H1 (cell line): ENCODE measurements at regions of chr12 and their contacts with region 1.

Region 1: DNA sequence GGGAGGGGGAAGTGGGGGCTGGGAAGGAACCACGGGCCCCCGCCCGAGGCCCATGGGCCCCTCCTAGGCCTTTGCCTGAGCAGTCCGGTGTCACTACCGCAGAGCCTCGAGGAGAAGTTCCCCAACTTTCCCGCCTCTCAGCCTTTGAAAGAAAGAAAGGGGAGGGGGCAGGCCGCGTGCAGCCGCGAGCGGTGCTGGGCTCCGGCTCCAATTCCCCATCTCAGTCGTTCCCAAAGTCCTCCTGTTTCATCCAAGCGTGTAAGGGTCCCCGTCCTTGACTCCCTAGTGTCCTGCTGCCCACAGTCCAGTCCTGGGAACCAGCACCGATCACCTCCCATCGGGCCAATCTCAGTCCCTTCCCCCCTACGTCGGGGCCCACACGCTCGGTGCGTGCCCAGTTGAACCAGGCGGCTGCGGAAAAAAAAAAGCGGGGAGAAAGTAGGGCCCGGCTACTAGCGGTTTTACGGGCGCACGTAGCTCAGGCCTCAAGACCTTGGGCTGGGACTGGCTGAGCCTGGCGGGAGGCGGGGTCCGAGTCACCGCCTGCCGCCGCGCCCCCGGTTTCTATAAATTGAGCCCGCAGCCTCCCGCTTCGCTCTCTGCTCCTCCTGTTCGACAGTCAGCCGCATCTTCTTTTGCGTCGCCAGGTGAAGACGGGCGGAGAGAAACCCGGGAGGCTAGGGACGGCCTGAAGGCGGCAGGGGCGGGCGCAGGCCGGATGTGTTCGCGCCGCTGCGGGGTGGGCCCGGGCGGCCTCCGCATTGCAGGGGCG is at the start of gene GAPDH:
- DNase-seq: peak; percentile 87 to 91
- H3K4me3 ChIP-seq: peak within 1 kb of the TSS; percentile 83 to 98 (median 90)
- H3K27ac ChIP-seq: peak within 1 kb of the TSS; percentile 98
- H3K4me1 ChIP-seq: peaks cover 0 to 19% (median 16%) of the 10 kb centered on the region in 4 experiments; a peak in 6 of 7 replicates
- H3K27me3 ChIP-seq: no peaks in the 10 kb centered on the region
- CTCF ChIP-seq: no peak; a peak in 1 of 4 replicates
- EP300 ChIP-seq: peak in 1 of 2 experiments; percentile 7; a peak in 1 of 3 replicates
- POLR2A ChIP-seq: peak in 1 of 2 experiments; percentile 85; a peak in 1 of 3 replicates
- RAD21 ChIP-seq: no peak
- total RNA-seq, gene GAPDH: 5,175 and 5,215 TPM in 2 replicates

Region 2: DNA sequence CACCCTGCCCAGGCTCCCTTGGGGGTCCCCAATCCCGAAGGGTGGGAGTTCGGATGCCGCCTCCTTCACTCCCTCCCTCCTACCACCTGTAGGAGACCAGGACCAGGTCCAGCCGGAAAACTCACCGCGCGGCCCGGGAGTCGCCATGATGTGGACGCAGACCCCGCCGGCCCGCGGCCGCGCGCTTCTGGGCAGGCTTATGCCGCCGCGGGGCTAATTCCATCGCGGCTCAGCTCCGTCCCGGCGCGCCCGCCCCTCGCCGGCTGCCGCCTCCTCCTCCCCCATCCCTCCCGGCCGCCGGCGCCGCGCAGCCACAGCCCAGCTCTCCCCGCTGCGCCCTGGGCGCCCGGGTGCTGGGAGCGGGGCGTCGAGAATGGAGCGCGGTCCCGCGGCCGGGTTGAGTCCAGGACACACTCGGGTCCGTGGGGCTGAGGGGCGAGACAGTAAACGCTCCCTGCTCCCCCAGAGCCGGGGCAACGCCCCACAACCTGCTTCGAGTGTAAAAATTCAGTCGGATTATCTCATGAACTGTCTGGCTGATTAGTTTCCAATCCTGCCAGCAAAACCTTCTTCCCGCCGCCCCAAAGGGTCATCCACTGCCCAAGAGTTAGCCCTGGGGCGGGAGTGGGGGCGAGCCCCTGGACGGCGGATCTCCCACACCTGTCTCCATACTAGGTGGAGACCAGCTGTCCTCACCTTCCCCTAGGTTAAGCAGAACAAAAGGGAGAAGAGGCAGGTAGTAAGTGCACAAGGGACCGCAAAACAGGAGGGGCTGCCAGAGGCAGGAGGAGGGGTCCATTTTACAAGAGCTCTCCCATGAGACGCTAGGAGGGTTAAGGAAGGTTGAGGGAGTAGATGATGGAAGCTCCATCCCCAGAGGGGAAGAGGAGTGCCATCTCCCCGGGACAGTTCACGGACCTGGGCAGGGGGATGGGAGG is 588.8 kb before region 1 on chr12 and contains the start of gene ANO2:
- CTCF ChIA-PET with region 1: no interaction called
- POLR2A ChIA-PET with region 1: no interaction called
- DNase-seq: peak in 1 of 2 experiments; percentile 71
- H3K4me3 ChIP-seq: peak within 1 kb of the TSS; percentile 64 to 91 (median 82)
- H3K27ac ChIP-seq: no peak within 1 kb of the TSS
- H3K4me1 ChIP-seq: peaks cover 0 to 5% (median 2%) of the 10 kb centered on the region in 4 experiments; a peak in 4 of 7 replicates
- H3K27me3 ChIP-seq: peaks cover 4 to 23% (median 10%) of the 10 kb centered on the region in 4 experiments; a peak in 5 of 7 replicates
- CTCF ChIP-seq: no peak
- EP300 ChIP-seq: no peak
- POLR2A ChIP-seq: peak; percentile 62 to 74
- RAD21 ChIP-seq: no peak
- total RNA-seq, gene ANO2: 3.5 and 5.5 TPM in 2 replicates

Region 3: DNA sequence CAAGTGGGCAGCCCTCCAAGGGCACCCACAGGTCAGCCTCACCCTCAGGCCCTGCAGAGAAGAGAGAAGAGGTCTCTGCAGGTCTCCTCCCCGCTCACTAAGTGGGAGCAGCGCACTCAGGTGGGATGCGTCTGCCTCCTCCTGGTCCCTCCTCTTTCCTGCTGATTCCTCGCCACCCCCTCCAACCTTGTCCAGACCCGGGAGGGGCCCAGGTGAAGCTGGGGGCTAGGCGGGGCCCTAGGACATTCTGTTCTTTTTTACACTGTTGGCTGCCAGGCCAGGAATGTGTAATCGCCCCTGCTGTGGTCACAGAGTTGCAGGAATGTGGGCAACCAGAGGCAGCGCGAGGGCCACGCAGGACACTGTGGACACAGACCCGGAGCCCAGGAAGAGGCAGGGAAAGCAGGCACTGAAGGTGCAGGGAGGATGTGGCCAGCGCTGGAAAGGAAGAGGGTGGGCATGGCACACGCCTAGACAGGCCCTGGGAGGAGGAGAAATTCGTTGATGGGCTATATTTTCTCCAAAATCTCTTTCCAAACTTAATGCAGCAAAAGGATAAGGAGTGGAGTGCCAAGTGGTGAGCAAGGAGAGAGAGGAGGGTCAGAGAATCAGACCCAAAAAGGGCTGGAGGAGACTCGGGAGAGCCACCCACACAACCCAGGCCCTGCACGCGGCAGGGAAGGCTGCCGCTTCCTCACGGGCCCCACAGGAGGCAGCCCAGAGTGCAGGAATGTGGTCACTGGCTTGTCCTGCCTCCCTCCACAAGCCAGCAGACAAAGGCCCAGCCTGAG is 157.8 kb before region 1 on chr12:
- CTCF ChIA-PET with region 1: interaction called, 3 read pairs
- POLR2A ChIA-PET with region 1: interaction called, 37 read pairs
- DNase-seq: peak; percentile 54 to 74
- H3K4me3 ChIP-seq: peak overlapping the region; percentile 64 to 84 (median 74)
- H3K27ac ChIP-seq: peak overlapping the region; percentile 92
- H3K4me1 ChIP-seq: peaks cover 5 to 47% (median 33%) of the 10 kb centered on the region in 4 experiments
- H3K27me3 ChIP-seq: peaks cover 0 to 2% (median 0%) of the 10 kb centered on the region in 4 experiments; a peak in 2 of 7 replicates
- CTCF ChIP-seq: peak in 2 of 3 experiments; percentile 41 to 58; a peak in 3 of 4 replicates
- EP300 ChIP-seq: no peak
- POLR2A ChIP-seq: peak in 1 of 2 experiments; percentile 69; a peak in 2 of 3 replicates
- RAD21 ChIP-seq: peak; percentile 30 to 55

Region 4: GRCh38 chr12:6470375-6471163 is 63.5 kb before region 1 on chr12 and contains the start of gene VAMP1:
- CTCF ChIA-PET with region 1: interaction called, 8 read pairs
- POLR2A ChIA-PET with region 1: interaction called, 84 read pairs
- DNase-seq: peak; percentile 91 to 97
- H3K4me3 ChIP-seq: peak within 1 kb of the TSS; percentile 75 to 87 (median 86)
- H3K27ac ChIP-seq: peak within 1 kb of the TSS; percentile 67; the same call in 1 of the 2 replicates
- H3K4me1 ChIP-seq: peaks cover 3 to 7% (median 3%) of the 10 kb centered on the region in 4 experiments; a peak in 3 of 7 replicates
- H3K27me3 ChIP-seq: no peaks in the 10 kb centered on the region; a peak in 1 of 7 replicates
- CTCF ChIP-seq: no peak
- EP300 ChIP-seq: no peak
- POLR2A ChIP-seq: peak; percentile 99
- RAD21 ChIP-seq: no peak
- total RNA-seq, gene VAMP1: 9.3 and 10.8 TPM in 2 replicates

Region 5: DNA sequence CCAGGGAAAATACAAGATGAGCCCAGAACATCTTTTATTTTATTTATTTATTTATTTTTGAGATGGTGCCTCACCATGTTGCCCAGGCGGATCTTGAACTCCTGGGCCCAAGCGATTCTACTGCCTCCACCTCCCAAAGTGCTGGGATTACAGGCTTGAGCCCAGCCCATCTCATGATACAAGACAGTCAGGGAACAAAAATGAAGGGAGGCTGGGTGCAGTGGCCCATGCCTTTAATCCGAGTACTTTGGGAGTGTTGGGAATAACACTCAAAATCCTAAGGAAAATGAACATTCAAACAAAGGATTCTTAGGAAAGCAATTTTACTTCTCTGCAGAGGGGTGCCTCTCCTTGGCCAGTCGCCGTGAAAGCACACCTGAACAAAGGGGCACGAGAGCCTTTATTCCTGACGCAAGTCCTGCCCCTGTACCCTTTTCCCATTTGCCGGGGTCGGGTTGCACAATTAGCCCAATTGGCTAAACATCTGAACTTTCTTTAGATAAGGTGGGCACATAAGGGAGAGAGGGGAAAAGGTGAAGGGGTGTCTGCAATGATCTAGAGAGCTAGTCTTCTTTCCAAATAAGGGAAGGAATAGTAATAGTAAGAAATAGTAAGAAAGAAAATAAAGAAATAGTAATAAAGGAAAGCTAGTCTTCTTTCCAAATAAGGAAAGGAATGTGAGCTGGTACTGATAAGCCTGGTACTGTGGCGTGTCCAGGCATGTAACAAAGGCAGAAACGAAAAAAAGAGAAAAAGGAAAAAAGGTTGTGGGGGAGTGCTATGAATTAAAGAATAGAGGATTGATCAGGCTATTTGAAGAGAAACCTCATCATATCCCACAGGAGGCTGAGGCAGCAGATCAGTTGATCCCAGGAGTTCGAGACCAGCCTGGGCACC is 26.8 kb before region 1 on chr12:
- CTCF ChIA-PET with region 1: interaction called, 43 read pairs
- POLR2A ChIA-PET with region 1: interaction called, 37 read pairs
- DNase-seq: peak; percentile 19 to 52
- H3K4me3 ChIP-seq: no peak overlapping the region
- H3K27ac ChIP-seq: peak overlapping the region; percentile 43
- H3K4me1 ChIP-seq: peaks cover 3 to 7% (median 5%) of the 10 kb centered on the region in 4 experiments; a peak in 4 of 7 replicates
- H3K27me3 ChIP-seq: no peaks in the 10 kb centered on the region
- CTCF ChIP-seq: no peak
- EP300 ChIP-seq: no peak
- POLR2A ChIP-seq: peak in 1 of 2 experiments; percentile 70; a peak in 2 of 3 replicates
- RAD21 ChIP-seq: no peak

Region 6: DNA sequence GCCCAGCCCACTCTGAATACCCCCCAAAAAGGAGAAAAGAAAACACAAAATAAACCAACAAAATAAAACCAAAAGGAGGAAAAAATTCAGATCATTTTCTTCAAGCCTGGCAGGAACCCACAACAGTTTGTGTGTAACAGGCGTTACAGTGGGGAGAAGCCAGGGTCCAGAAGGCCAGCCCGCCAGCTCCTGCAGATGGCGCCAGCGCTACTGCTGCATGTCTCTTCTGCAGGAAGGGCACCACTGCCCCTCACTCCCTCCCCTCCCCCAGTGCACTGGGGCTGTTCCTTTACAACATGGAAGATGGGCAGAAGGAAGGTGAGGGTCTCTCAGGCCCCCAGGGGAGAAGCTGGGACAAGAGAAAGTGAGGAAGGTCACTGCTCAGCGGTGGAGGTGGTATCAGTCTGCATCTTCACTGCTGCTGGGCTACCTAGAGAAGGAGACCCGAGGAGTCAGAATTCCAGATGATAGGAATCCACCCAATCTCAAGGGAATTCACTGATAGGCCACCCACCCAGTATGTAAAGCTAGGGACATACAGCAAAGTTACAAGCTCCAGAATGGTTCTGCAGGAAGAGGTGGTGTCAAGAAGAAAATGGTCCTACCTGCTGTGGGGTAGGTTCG is 36.3 kb after region 1 on chr12:
- CTCF ChIA-PET with region 1: interaction called, 462 read pairs
- POLR2A ChIA-PET with region 1: interaction called, 665 read pairs
- DNase-seq: peak in 1 of 2 experiments; percentile 87
- H3K4me3 ChIP-seq: no peak overlapping the region
- H3K27ac ChIP-seq: no peak overlapping the region; the same call in 1 of the 2 replicates
- H3K4me1 ChIP-seq: peaks cover 0 to 8% (median 4%) of the 10 kb centered on the region in 4 experiments; a peak in 5 of 7 replicates
- H3K27me3 ChIP-seq: no peaks in the 10 kb centered on the region
- CTCF ChIP-seq: peak; percentile 68 to 96 (median 87)
- EP300 ChIP-seq: no peak
- POLR2A ChIP-seq: no peak
- RAD21 ChIP-seq: peak; percentile 32 to 45; a peak in 3 of 4 replicates

Region 7: DNA sequence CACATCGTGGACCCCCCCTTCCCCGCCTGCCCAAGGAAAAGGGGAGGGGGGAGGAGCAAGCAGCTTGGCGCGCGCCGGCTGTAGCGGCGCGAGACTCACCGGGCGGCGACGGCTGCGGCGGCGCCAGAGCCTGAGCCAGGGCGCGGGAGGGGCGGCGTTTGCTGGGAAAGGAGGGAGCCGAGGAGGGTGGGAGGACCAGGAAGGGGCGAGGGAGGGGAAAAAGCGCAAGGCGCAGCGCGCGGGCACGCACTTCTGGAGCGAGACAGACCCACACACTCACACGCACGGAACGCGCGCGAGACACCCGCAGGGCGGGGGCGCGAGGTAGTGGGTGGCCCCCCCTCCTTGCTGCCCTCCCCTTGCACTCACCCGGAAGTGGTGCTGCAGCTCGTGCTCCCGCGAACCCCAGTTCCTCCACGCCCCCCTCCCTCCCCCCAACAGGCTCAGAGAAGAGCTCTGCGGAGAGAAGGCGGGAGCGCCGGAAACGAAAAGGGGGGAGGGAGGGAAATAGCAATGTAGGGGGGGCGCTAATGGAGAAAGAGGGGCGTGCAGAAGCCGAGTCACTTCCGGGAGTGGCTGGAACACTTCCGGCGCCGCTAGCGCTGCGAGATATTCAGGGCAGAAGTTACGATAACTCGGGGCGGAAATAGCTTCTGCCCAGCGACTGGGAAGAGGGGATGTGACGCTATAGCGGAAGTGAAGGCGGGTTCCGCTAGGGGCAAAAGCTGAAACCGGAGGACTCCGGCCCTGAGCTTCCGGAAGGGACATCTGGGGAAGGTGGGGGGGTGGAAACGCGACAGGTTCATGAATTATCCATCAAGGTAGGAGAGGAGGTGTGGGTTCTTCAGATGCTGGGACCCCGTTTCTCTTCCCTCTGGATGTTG is 155.1 kb after region 1 on chr12 and contains the start of gene ZNF384:
- CTCF ChIA-PET with region 1: interaction called, 3 read pairs
- POLR2A ChIA-PET with region 1: interaction called, 12 read pairs
- DNase-seq: peak; percentile 89 to 97
- H3K4me3 ChIP-seq: peak within 1 kb of the TSS; percentile 78 to 96 (median 88)
- H3K27ac ChIP-seq: peak within 1 kb of the TSS; percentile 90
- H3K4me1 ChIP-seq: peaks cover 0 to 9% (median 7%) of the 10 kb centered on the region in 4 experiments; a peak in 6 of 7 replicates
- H3K27me3 ChIP-seq: no peaks in the 10 kb centered on the region
- CTCF ChIP-seq: no peak
- EP300 ChIP-seq: peak in 1 of 2 experiments; percentile 62; a peak in 1 of 3 replicates
- POLR2A ChIP-seq: peak in 1 of 2 experiments; percentile 56; a peak in 1 of 3 replicates
- RAD21 ChIP-seq: no peak
- total RNA-seq, gene ZNF384: 59.6 and 60.1 TPM in 2 replicates